ENCODE measurements at regions of chr3 and their contacts with region 1.

Region 1: DNA sequence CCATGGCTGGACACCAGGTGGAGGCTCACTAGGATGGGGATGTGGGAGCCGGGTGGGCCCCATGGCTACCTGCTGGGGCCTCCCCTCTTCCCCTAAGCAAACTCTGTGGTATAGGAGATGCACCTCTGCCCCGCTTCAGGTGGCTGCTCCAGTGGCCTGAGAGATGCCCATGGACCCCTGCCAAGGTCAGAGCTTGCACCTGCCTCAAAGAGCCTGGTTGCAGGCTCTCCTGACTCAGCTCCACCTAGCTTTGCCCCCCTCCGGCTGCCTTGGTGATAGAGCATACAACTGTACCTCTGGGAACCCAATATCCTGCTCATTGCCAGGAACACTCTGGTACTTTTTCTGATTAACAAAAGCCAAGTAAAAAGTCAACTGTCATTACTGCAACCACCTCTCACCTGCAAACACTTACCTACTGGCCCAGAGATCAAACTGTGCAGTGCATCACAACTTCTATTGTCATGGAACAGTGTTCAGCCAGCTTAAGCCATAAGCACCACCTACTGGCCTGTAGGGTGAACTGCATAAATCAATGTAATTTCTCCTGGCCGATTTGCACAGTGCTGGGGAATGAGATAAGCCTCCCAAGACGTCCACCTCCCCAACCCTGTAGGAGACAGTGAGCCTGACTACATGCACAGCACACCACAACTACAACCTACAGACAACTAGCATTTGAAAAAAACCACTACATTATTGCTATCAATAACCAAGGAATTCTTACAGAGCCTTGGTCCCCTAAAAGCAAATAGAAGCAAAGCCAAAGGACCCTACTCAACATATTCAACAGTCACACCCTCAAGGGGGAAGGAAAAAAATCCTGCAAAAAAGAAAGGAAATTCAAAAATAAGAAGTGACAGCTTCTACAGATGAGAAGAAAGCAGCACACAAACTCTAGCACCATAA is 352.4 kb upstream of the ARHGEF26 start:
- DNase-seq: peak; percentile 38 to 50
- H3K4me3 ChIP-seq: no peak overlapping the region
- H3K27ac ChIP-seq: no peak overlapping the region
- H3K4me1 ChIP-seq: 0 out of 2 replicates have a peak, but pooled peaks cover 9% of the 10 kb centered on the region
- H3K27me3 ChIP-seq: no peaks in the 10 kb centered on the region
- CTCF ChIP-seq: peak; percentile 93

Region 2: DNA sequence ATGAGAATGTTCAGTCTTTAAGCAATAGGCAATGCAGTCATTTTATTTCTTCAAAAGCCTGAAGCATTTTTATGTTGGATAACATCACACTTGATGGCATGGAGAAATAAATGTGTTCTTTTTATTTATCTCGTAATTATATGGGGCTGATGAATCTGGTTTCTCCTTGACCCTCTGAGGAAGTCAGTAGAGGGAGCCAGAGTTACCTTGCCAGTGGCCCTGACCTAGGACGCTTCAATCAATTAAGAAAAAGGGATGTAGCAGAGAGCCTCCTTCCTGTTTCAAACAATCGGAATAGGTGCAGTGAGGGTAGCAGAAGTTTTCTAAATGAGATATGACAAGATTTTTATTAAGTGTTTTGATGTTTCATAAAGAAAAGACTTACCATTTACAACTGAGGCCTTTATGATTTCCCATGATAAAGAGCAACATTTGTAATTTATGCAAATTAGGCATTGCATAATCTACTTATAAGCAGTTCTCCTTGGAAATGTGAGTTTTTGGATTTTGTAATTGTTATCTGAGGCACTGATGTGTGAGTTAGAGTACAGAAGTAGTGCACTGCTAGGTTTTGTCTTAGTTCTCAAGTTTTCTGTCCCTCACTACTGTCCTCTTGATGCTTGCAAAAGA is 477.6 kb before region 1 on chr3:
- CTCF ChIA-PET with region 1: no interaction called
- POLR2A ChIA-PET with region 1: no interaction called
- intact Hi-C with region 1: loop called (anchors 2 kb)
- DNase-seq: no peak
- H3K4me3 ChIP-seq: no peak overlapping the region
- H3K27ac ChIP-seq: no peak overlapping the region
- H3K4me1 ChIP-seq: no peaks in the 10 kb centered on the region
- H3K27me3 ChIP-seq: no peaks in the 10 kb centered on the region
- CTCF ChIP-seq: peak; percentile 38; the same call in 1 of the 2 replicates

Region 3: DNA sequence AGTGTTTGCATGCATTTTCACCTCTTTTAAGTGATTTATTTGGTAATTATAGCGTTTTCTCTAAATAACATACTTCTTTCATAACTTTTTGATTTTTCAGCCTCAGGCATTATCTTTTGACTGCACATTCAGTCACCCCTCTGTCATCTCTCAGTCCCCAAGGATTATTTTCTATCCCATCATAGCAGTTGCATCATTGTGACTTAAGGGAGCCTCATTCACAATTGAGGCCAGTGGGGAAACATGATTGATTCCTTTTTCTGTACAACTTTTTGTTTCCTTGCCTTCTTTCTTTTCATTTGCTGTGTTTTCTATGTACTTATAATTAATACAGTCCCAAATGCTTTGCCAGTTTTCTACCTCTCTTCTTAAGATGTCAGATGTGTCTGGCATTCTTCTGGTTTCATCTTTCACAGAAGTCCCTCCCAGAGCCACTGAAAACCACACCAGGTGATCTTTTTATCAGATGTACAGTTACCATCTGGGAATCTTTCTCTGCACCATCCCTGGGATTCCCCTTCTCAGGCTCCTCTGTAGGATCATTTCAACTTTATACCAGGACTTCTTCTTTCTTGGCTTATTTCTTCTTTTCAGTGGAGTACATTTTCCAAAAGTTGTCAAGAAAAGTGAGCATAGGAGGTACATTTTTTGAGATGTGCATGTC is 455.4 kb before region 1 on chr3:
- CTCF ChIA-PET with region 1: no interaction called
- POLR2A ChIA-PET with region 1: no interaction called
- intact Hi-C with region 1: loop called (anchors 5 kb)
- DNase-seq: no peak
- H3K4me3 ChIP-seq: no peak overlapping the region
- H3K27ac ChIP-seq: no peak overlapping the region
- H3K4me1 ChIP-seq: 0 out of 2 replicates have a peak, but pooled peaks cover 5% of the 10 kb centered on the region
- H3K27me3 ChIP-seq: no peaks in the 10 kb centered on the region
- CTCF ChIP-seq: no peak

Region 4: GRCh38 chr3:153443961-153444360 is 324.9 kb before region 1 on chr3:
- CTCF ChIA-PET with region 1: no interaction called
- POLR2A ChIA-PET with region 1: no interaction called
- intact Hi-C with region 1: loop called (anchors 10 kb)
- DNase-seq: no peak
- H3K4me3 ChIP-seq: no peak overlapping the region
- H3K27ac ChIP-seq: no peak overlapping the region
- H3K4me1 ChIP-seq: no peaks in the 10 kb centered on the region
- H3K27me3 ChIP-seq: no peaks in the 10 kb centered on the region
- CTCF ChIP-seq: no peak; the same call in 1 of the 2 replicates